ENCODE measurements at regions of chr3 and their contacts with region 1.

Region 1: GRCh38 chr3:126982471-126983175 is at the start of gene PLXNA1:
- DNase-seq: peak in 9 of 10 donors; percentile 52 to 83 (median 59)
- H3K4me3 ChIP-seq: peak within 1 kb of the TSS; percentile 57 to 91 (median 79)
- H3K27ac ChIP-seq: peak within 1 kb of the TSS in 40 of 59 donors; percentile 15 to 85 (median 74)
- H3K27me3 ChIP-seq: no peaks in the 10 kb centered on the region
- CTCF ChIP-seq: peak; percentile 45 to 95 (median 82)
- total RNA-seq, gene PLXNA1: 28.6 to 94.1 (median 62.9) TPM

Region 2: DNA sequence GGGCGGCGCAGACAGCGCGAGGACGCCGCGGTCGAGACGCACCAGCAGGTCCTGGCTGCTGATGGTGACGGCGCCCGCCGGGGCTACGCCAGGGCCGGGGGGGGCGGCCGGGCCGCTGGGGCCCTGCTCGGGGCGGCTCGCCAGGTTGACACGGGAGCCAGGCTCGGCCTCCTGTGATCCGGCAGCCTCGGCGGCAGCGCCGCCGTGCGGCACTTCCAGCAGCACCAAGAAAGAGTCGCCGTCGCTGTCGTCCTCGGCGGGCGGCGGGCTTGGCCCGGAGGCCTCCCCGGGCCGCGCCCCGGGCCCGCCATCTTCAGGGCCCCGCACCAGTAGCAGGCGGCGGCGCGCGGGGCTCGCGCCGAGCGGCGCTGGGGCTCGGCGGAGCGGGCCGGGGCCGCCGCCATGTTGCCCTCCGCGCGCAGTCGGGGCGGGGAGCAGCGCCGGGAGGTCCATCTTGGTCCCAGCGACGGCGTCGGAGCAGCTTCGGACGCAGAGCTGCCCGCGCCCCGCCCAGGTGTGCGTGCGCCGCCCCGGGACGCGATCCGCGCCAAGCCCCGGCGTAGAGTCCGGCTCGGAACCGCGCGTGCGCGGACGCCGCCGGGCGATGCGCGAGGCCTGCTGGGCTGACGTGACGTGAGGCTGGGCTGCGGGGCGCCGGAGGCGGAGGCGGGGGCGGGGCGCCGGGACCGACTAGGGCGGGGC is 507.1 kb before region 1 on chr3 and contains the start of gene ZXDC:
- intact Hi-C with region 1: loop called in 1 of 2 experiments (anchors 10 kb)
- DNase-seq: peak; percentile 80 to 97 (median 91)
- H3K4me3 ChIP-seq: peak within 1 kb of the TSS; percentile 65 to 94 (median 81)
- H3K27ac ChIP-seq: peak within 1 kb of the TSS; percentile 23 to 95 (median 85)
- H3K27me3 ChIP-seq: no peaks in the 10 kb centered on the region
- CTCF ChIP-seq: peak in 35 of 56 donors; percentile 14 to 56 (median 30)
- total RNA-seq, gene ZXDC: 28.6 to 58.7 (median 41.4) TPM

Region 3: DNA sequence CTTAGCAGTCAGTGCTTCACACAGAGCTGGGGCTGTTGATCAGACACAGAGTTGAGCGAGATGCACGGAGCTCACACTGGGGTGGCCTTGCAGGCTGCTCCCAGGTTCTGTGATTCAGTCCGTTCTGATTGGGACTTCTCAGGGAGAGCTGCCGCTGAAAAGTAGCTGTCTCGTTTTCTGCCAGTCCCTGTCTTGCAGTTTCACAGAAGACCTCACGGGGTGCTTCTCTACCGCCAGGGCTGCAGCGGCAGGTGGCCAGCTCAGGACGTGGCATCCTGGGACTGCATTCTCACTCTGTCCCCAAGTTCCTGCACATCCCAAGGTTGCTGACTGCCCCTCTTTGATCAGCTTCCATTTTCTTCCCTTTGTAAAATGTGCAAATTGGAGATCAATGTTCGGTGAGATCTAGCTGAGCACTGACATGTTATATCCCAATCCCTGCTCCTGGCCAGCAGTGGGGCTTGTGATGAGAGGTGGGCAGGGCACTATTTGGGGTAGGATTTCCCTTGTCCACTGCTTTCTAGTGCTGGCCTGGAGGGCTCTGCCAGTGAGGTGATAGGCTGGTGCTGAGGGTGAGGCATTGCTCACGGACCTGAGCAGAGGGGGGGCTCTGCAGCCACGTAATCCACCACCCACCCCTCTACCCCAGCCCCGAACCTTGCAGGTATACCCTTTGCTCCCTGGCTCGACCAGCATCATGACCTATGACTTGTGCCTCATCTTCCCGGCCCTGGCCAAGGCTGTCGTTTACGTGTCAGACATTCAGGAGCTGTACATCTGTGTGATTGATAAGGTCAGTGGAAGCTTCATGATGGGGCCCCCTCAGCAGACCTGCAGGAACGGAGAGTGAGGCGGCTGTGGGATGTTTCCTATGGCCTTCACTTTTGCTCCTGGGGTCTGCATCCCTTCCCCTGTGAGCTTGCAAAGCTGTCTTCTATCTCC is 322.4 kb before region 1 on chr3:
- intact Hi-C with region 1: no loop called
- DNase-seq: no peak
- H3K4me3 ChIP-seq: no peak overlapping the region
- H3K27ac ChIP-seq: no peak overlapping the region
- H3K27me3 ChIP-seq: no peaks in the 10 kb centered on the region
- CTCF ChIP-seq: peak in 2 of 56 donors; percentile 14 to 23

Region 4: GRCh38 chr3:126679318-126679751 is 303.3 kb before region 1 on chr3:
- intact Hi-C with region 1: loop called (anchors 10 kb)
- DNase-seq: peak; percentile 75 to 92 (median 86)
- H3K4me3 ChIP-seq: peak overlapping the region in 31 of 59 donors; percentile 1 to 45 (median 19)
- H3K27ac ChIP-seq: peak overlapping the region in 5 of 59 donors; percentile 10 to 46 (median 34)
- H3K27me3 ChIP-seq: peaks cover 0 to 5% (median 0%) of the 10 kb centered on the region in 45 donors
- CTCF ChIP-seq: peak; percentile 91 to 100 (median 98)

Region 5: GRCh38 chr3:126745760-126746394 is 236.7 kb before region 1 on chr3:
- intact Hi-C with region 1: loop called in 1 of 2 experiments (anchors 2 kb)
- DNase-seq: peak in 1 of 10 donors; percentile 35
- H3K4me3 ChIP-seq: no peak overlapping the region
- H3K27ac ChIP-seq: no peak overlapping the region
- H3K27me3 ChIP-seq: no peaks in the 10 kb centered on the region
- CTCF ChIP-seq: no peak

Region 6: GRCh38 chr3:127455541-127456450 is 473.2 kb after region 1 on chr3:
- intact Hi-C with region 1: loop called (anchors 2 kb)
- DNase-seq: peak; percentile 65 to 89 (median 78)
- H3K4me3 ChIP-seq: peak overlapping the region; percentile 20 to 64 (median 48)
- H3K27ac ChIP-seq: peak overlapping the region in 48 of 59 donors; percentile 12 to 84 (median 61)
- H3K27me3 ChIP-seq: peaks cover 0 to 34% (median 14%) of the 10 kb centered on the region in 45 donors
- CTCF ChIP-seq: peak; percentile 73 to 100 (median 95)